Activated B cell treated with CpG ODN at 0.5 μM for 24 hours (primary cell): ENCODE measurements at regions of chr12 and their contacts with region 1.

Region 1: GRCh38 chr12:14394317-14395073 is 29.0 kb downstream of the ATF7IP start:
- DNase-seq: no peak
- ATAC-seq: peak; percentile 75
- H3K4me3 Mint-ChIP-seq: peak overlapping the region; percentile 77
- H3K27ac Mint-ChIP-seq: peak overlapping the region; percentile 90
- H3K4me1 Mint-ChIP-seq: peaks cover 82% of the 10 kb centered on the region
- H3K27me3 Mint-ChIP-seq: no peaks in the 10 kb centered on the region
- CTCF ChIP-seq: no peak

Region 2: GRCh38 chr12:14379508-14379907 is 15.0 kb before region 1 on chr12:
- CTCF ChIA-PET with region 1: no interaction called
- POLR2A ChIA-PET with region 1: interaction called, 18 read pairs
- intact Hi-C with region 1: loop called (anchors 2 kb)
- DNase-seq: no peak
- ATAC-seq: no peak
- H3K4me3 Mint-ChIP-seq: no peak overlapping the region
- H3K27ac Mint-ChIP-seq: no peak overlapping the region
- H3K4me1 Mint-ChIP-seq: peaks cover 31% of the 10 kb centered on the region
- H3K27me3 Mint-ChIP-seq: no peaks in the 10 kb centered on the region
- CTCF ChIP-seq: no peak